Mammary epithelial cell (primary cell): ENCODE measurements at regions of chr4 and their contacts with region 1.

Region 1: GRCh38 chr4:152325818-152326217 is 210.1 kb downstream of the FBXW7 start:
- DNase-seq: peak; percentile 90
- H3K4me3 ChIP-seq: no peak overlapping the region
- H3K27ac ChIP-seq: peak overlapping the region; percentile 72
- H3K4me1 ChIP-seq: peaks cover 38% of the 10 kb centered on the region
- H3K27me3 ChIP-seq: no peaks in the 10 kb centered on the region
- CTCF ChIP-seq: no peak

Region 2: GRCh38 chr4:152106113-152106763 is 219.6 kb before region 1 on chr4:
- CTCF ChIA-PET with region 1: no interaction called
- dilution Hi-C with region 1: no loop called
- in situ Hi-C with region 1: no loop called
- intact Hi-C with region 1: loop called (anchors 1 kb)
- DNase-seq: peak; percentile 92
- H3K4me3 ChIP-seq: no peak overlapping the region
- H3K27ac ChIP-seq: peak overlapping the region; percentile 74
- H3K4me1 ChIP-seq: peaks cover 28% of the 10 kb centered on the region
- H3K27me3 ChIP-seq: no peaks in the 10 kb centered on the region
- CTCF ChIP-seq: no peak

Region 3: GRCh38 chr4:152385551-152385950 is 59.7 kb after region 1 on chr4:
- CTCF ChIA-PET with region 1: no interaction called
- dilution Hi-C with region 1: no loop called
- in situ Hi-C with region 1: no loop called
- intact Hi-C with region 1: no loop called
- DNase-seq: no peak
- H3K4me3 ChIP-seq: no peak overlapping the region
- H3K27ac ChIP-seq: no peak overlapping the region
- H3K4me1 ChIP-seq: no peaks in the 10 kb centered on the region
- H3K27me3 ChIP-seq: no peaks in the 10 kb centered on the region
- CTCF ChIP-seq: peak; percentile 60 to 62